ENCODE measurements at regions of chr5 and their contacts with region 1.

Region 1: DNA sequence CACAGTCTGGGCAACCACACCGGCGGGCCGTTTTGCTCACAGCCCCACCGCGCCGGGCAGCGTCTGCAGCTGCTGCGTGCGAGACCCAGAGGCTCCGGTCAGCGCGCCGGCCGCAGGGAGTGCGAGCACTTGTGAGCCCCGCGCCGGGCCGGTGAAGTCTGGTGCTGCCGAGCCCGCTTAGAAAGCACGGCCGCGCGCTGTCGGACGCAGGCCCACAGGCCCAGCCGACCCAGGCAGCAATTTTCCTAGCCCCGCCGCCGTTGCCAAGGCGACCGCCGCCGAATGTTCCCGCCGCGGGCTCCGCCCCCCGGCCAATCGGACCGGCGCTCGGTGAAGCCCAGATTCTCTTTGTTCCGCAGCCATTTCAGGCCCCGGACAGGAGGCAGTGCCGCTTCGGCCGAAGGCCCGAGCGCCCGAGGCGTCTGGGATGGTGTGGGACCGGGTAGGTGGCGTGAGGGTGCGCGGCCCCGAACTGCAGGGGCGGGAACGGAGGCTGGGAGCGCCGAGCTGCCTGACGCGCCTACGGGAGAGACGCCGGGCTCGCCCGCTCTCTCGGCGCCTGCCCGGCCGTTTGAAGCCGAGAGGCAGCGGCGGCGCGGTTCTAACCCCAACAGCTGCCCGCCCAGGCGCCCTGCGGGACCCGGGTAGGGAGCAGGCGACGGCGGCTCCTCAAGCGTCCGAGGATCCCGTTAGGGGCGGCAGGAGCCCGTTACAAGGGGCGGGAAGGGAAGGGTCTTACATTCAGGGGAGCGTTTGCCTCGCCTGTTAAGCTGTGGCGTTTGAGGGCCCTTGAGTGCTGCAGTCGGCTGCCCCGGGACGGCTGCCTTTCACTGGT is at the start of gene TNPO1:
- DNase-seq: peak; percentile 96
- H3K4me3 ChIP-seq: peak within 1 kb of the TSS; percentile 65 to 88 (median 74)
- H3K27ac ChIP-seq: peak within 1 kb of the TSS; percentile 94 to 98 (median 96)
- H3K4me1 ChIP-seq: peaks cover 0 to 29% (median 24%) of the 10 kb centered on the region in 4 donors
- H3K27me3 ChIP-seq: no peaks in the 10 kb centered on the region
- CTCF ChIP-seq: no peak
- EP300 ChIP-seq: peak in 1 of 4 donors; percentile 32
- POLR2A ChIP-seq: peak; percentile 90 to 92
- total RNA-seq, gene TNPO1: 86.2 to 145 (median 113) TPM

Region 2: GRCh38 chr5:72366324-72366976 is 450.1 kb before region 1 on chr5:
- intact Hi-C with region 1: loop called (anchors 2 kb)
- DNase-seq: peak; percentile 81
- H3K4me3 ChIP-seq: no peak overlapping the region
- H3K27ac ChIP-seq: no peak overlapping the region
- H3K4me1 ChIP-seq: peaks cover 0 to 22% (median 8%) of the 10 kb centered on the region in 4 donors
- H3K27me3 ChIP-seq: no peaks in the 10 kb centered on the region
- CTCF ChIP-seq: peak; percentile 67 to 77 (median 74)
- EP300 ChIP-seq: no peak
- POLR2A ChIP-seq: no peak

Region 3: DNA sequence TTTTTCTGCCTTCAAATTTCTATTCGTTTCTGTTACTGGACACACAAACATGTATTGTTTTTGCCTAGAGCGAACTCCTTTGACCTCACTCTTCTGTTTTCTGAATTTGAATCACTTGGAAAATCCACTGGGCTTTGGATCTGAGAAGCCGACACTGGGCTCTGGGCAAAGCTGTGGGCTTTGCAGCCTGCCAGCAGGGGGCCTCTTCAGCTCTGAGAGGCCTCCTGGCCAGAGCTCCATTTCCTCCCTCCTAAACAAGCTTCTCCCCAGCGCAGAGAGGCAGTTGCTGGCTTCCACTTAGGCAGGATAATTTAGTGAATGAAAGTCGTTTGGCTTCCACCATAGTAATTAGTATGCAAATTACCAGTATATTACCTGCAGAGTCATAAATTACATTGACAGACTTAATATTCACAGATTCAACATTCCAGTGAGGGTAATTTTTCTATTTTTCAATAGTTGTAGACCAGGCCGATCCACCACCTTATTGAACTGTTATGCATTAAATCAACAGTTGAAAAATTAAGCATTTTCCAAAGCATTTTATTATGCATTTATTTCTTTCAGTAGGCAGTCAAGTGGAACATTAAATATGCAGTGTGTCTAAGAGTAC is 205.3 kb before region 1 on chr5:
- intact Hi-C with region 1: loop called (anchors 2 kb)
- DNase-seq: peak; percentile 88
- H3K4me3 ChIP-seq: no peak overlapping the region
- H3K27ac ChIP-seq: no peak overlapping the region
- H3K4me1 ChIP-seq: peaks cover 2 to 19% (median 10%) of the 10 kb centered on the region in 4 donors
- H3K27me3 ChIP-seq: no peaks in the 10 kb centered on the region
- CTCF ChIP-seq: peak; percentile 75 to 95 (median 86)
- EP300 ChIP-seq: no peak
- POLR2A ChIP-seq: no peak

Region 4: GRCh38 chr5:72692231-72692637 is 124.3 kb before region 1 on chr5:
- intact Hi-C with region 1: loop called (anchors 2 kb)
- DNase-seq: no peak
- H3K4me3 ChIP-seq: no peak overlapping the region
- H3K27ac ChIP-seq: peak overlapping the region in 2 of 4 donors; percentile 36 to 44
- H3K4me1 ChIP-seq: peaks cover 0 to 24% (median 23%) of the 10 kb centered on the region in 4 donors
- H3K27me3 ChIP-seq: no peaks in the 10 kb centered on the region
- CTCF ChIP-seq: no peak
- EP300 ChIP-seq: no peak
- POLR2A ChIP-seq: no peak

Region 5: DNA sequence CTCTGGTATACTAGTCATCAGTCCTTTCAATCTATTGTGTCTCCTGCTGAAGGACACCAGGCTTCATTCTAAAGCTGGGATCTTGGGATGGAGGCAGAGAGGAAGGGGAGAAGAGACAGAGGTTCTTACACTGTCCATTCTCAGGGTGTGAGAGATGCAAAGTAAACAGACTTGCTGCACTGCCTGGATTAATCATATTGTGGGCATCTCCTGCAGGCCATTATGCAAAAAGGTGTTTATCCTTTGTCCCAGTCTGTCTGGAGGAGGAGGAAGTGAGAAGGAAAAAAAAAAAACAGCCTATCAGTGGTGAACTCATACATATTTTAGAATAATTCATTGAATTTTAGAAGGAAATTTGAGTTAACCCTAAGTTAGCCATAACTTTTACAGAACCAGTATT is 92.9 kb before region 1 on chr5:
- intact Hi-C with region 1: loop called (anchors 10 kb)
- DNase-seq: no peak
- H3K4me3 ChIP-seq: no peak overlapping the region
- H3K27ac ChIP-seq: no peak overlapping the region
- H3K4me1 ChIP-seq: peaks cover 0 to 31% (median 17%) of the 10 kb centered on the region in 4 donors
- H3K27me3 ChIP-seq: no peaks in the 10 kb centered on the region
- CTCF ChIP-seq: no peak
- EP300 ChIP-seq: no peak
- POLR2A ChIP-seq: no peak

Region 6: DNA sequence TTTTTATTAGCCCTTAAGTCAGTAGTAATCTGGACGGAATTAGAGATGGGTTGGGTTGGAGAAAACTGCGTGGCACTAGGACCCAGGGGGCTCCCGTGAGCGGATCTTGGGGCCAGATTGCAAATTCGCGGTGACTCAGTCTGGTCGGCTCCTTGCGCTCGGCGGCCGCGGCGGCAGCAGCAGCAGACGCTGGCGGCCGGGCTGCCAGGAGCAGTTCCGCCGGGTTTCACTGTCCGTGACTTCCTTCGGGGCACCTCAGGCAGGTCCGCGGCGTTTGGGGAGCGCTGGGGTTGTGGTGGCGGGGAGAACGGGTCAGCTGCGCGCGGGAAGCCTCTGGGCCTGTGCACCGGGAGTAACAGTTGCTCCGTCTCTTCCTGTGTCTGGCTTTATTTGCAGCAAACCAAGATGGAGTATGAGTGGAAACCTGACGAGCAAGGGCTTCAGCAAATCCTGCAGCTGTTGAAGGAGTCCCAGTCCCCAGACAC is 31.5 kb after region 1 on chr5:
- intact Hi-C with region 1: loop called (anchors 1 kb)
- DNase-seq: peak; percentile 93
- H3K4me3 ChIP-seq: peak overlapping the region; percentile 67 to 92 (median 77)
- H3K27ac ChIP-seq: peak overlapping the region; percentile 92 to 95 (median 94)
- H3K4me1 ChIP-seq: peaks cover 0 to 66% (median 46%) of the 10 kb centered on the region in 4 donors
- H3K27me3 ChIP-seq: no peaks in the 10 kb centered on the region
- CTCF ChIP-seq: no peak
- EP300 ChIP-seq: no peak
- POLR2A ChIP-seq: peak; percentile 90 to 93